HepG2 (cell line): ENCODE measurements at regions of chr6 and their contacts with region 1.

Region 1: DNA sequence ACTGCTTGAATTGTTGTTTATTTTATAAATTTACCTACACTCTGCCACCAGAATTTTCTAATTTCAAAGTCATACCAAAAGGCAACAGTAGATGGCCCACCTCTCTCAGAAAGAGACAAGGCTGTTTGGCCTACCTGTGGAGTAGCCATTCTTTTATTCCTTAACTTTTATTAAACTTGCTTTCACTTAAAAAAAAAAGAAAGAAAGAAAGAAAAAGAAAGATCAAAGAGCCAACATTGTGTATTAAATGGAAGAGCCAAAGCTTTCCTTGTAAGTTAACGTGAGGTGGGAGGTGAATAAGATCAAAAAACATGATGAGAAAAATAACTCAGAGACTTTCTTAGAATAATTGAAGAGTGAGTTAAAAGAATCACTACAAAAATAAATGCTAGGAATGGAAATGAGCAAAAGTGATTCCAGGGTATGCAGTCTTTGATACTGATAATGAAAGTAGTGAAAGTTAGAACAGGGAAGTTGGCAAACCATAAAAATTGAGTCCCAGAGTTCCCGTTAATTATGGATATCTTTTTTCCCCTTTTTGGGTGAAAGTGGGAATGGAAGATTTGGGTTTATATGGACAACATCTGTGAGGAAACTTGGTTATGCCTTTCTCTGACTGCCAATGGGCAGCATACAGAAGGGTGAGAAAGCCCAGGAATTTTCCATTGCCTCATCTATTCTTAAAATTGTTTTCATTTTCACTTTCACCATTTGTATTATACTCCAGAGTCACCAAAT is 35.9 kb upstream of the MYB start:
- DNase-seq: peak; percentile 34
- ATAC-seq: peak; percentile 69
- H3K4me3 ChIP-seq: no peak overlapping the region
- H3K27ac ChIP-seq: no peak overlapping the region
- H3K4me1 ChIP-seq: no peaks in the 10 kb centered on the region
- H3K27me3 ChIP-seq: no peaks in the 10 kb centered on the region; a peak in 1 of 5 replicates
- CTCF ChIP-seq: peak; percentile 67
- EP300 ChIP-seq: no peak
- POLR2A ChIP-seq: no peak
- RAD21 ChIP-seq: peak; percentile 14; the same call in 1 of the 2 replicates

Region 2: DNA sequence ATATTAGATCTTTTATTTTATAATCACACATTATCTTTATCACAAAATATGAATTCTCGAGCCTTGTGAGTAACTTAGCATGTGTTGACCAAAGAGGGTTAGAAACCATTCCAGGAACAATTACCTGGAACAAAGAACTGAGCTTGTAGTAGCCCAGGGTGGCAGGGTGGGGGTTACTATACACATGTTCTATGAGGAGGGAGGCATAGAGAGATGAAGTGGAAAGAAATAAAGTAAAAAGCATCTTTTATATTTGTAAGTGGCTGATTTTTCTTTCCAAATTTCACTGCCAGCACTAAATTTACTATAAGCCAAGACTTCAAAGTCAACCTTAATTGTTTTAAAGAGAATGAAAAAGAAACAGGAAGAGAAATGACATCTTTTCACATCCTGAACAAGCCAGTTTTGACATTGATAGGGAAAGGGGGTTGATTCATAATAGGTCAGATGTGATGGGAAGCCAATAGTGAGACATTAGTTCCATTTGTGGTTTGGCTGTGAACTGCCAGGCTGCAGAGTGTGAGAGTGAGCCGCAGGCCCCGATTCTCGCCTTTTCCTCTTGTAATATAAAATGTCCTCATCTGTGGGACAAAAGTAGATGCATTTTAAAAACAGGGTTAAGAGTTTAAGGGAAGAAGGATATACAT is 16.8 kb before region 1 on chr6:
- CTCF ChIA-PET with region 1: no interaction called
- POLR2A ChIA-PET with region 1: no interaction called
- in situ Hi-C with region 1: no loop called
- intact Hi-C with region 1: no loop called
- DNase-seq: no peak
- ATAC-seq: no peak
- H3K4me3 ChIP-seq: no peak overlapping the region
- H3K27ac ChIP-seq: no peak overlapping the region
- H3K4me1 ChIP-seq: no peaks in the 10 kb centered on the region
- H3K27me3 ChIP-seq: no peaks in the 10 kb centered on the region
- CTCF ChIP-seq: no peak
- EP300 ChIP-seq: no peak
- POLR2A ChIP-seq: no peak
- RAD21 ChIP-seq: no peak

Region 3: DNA sequence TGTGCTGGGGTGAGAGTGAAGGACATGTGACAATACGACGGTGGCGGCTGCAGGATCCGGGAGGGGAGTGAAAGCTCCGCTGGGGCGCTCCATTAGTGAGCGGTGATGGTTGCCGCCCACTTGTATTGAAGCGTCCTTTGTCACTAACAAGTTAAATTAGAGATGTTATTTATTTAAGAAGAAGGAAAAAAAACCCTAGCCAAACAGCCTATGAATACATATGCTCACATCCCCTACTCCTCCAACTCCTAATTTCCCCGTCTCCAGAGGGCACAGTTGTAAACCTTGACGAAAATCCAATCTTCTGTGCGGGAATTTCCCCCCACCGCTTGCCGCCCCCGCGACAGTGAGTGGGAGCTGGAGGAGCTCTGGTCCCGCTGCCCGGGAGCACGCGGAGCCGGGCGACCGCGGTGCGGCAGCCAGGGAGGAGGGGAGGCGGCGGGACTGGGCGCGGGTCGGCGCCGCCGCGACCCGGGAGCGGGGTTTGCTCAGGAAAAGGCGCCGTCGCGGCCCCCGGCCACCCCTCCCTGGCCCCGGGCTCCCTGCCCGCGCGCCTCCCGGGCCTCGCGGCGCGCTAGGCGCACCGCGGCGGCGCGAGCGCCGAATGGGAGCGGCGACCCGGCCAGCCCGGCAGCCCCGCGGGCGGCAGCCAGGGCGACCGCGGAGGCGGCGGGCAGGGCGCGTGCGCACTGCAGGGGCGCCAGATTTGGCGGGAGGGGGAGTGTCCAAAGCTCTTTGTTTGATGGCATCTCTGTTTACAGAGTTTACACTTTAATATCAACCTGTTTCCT is 35.5 kb after region 1 on chr6 and contains the start of gene MYB:
- CTCF ChIA-PET with region 1: interaction called, 8 read pairs
- POLR2A ChIA-PET with region 1: no interaction called
- in situ Hi-C with region 1: no loop called
- intact Hi-C with region 1: loop called (anchors 5 kb)
- DNase-seq: no peak
- ATAC-seq: peak; percentile 80
- H3K4me3 ChIP-seq: peak within 1 kb of the TSS; percentile 38 to 76 (median 57)
- H3K27ac ChIP-seq: no peak within 1 kb of the TSS
- H3K4me1 ChIP-seq: peaks cover 28% of the 10 kb centered on the region
- H3K27me3 ChIP-seq: peaks cover 7 to 54% of the 10 kb centered on the region in 2 experiments
- CTCF ChIP-seq: no peak
- EP300 ChIP-seq: no peak
- POLR2A ChIP-seq: no peak
- RAD21 ChIP-seq: no peak
- total RNA-seq, gene MYB: 0.20 and 0.44 TPM in 2 replicates

Region 4: DNA sequence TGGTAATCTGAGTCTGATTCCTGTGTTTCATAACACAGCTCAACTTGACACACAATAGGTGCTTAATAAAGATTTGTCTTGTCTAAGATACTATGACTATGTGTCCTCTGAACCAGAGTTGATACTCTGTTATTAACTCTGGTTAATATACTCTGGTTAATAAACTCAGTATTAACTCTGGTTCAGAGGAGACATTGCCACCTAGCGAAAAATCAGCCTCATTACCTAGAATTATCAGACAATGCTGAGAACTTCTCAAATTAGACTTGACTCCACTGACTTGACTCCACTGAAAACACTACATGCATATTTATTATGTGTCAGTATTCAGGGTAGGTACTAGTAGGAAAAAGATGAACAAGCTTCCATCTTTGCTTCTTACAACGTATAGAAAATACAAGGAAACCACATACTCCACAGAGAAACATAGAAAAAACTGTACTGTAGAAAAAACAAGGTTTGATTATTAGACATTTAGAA is 278.5 kb after region 1 on chr6:
- CTCF ChIA-PET with region 1: interaction called, 25 read pairs
- POLR2A ChIA-PET with region 1: no interaction called
- in situ Hi-C with region 1: loop called (anchors 5 kb)
- intact Hi-C with region 1: loop called (anchors 1 kb)
- DNase-seq: peak; percentile 52
- ATAC-seq: peak; percentile 93
- H3K4me3 ChIP-seq: no peak overlapping the region
- H3K27ac ChIP-seq: no peak overlapping the region
- H3K4me1 ChIP-seq: peaks cover 24% of the 10 kb centered on the region
- H3K27me3 ChIP-seq: no peaks in the 10 kb centered on the region
- CTCF ChIP-seq: peak; percentile 74
- EP300 ChIP-seq: no peak
- POLR2A ChIP-seq: no peak
- RAD21 ChIP-seq: no peak; the same call in 1 of the 2 replicates

Region 5: GRCh38 chr6:135438907-135439535 is 293.8 kb after region 1 on chr6:
- CTCF ChIA-PET with region 1: interaction called, 15 read pairs
- POLR2A ChIA-PET with region 1: no interaction called
- in situ Hi-C with region 1: no loop called
- intact Hi-C with region 1: loop called (anchors 1 kb)
- DNase-seq: peak; percentile 30
- ATAC-seq: peak; percentile 63
- H3K4me3 ChIP-seq: no peak overlapping the region
- H3K27ac ChIP-seq: no peak overlapping the region
- H3K4me1 ChIP-seq: no peaks in the 10 kb centered on the region
- H3K27me3 ChIP-seq: no peaks in the 10 kb centered on the region
- CTCF ChIP-seq: peak; percentile 49
- EP300 ChIP-seq: no peak
- POLR2A ChIP-seq: no peak
- RAD21 ChIP-seq: peak; percentile 34; the same call in 1 of the 2 replicates